ENCODE measurements at regions of chr3 and their contacts with region 1.

Region 1: DNA sequence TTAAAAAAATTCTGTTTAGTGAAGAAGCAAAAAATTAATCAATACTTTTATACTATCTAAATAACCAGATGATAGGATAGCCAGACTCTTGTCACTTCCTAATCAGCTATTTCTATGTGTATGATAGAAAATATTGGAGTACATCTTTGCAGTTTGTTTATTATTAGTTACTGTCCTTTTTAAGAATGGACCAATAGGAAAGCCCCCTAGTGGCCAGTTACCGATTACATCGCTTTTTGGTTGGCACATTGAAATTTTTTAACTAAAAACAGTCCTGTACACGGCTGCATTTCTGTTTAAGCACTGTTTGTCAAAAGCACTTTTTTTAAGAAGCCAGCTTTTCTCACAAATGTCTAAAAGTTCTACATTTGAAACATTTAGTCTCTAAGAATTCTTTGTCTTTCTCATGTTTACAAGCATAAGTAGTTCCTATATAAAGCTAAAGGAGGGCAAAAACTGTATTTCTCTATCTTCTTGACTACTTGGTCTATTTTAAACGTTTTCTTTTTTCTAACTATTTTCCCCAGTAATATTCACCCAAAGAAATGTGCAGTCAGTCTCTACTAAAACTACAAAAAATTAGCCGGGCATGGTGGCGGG is 253.2 kb upstream of the LRTM1 start:
- H3K4me3 Mint-ChIP-seq: no peak overlapping the region
- H3K27ac Mint-ChIP-seq: no peak overlapping the region
- H3K4me1 Mint-ChIP-seq: no peaks in the 10 kb centered on the region
- H3K27me3 Mint-ChIP-seq: peaks cover 13% of the 10 kb centered on the region

Region 2: DNA sequence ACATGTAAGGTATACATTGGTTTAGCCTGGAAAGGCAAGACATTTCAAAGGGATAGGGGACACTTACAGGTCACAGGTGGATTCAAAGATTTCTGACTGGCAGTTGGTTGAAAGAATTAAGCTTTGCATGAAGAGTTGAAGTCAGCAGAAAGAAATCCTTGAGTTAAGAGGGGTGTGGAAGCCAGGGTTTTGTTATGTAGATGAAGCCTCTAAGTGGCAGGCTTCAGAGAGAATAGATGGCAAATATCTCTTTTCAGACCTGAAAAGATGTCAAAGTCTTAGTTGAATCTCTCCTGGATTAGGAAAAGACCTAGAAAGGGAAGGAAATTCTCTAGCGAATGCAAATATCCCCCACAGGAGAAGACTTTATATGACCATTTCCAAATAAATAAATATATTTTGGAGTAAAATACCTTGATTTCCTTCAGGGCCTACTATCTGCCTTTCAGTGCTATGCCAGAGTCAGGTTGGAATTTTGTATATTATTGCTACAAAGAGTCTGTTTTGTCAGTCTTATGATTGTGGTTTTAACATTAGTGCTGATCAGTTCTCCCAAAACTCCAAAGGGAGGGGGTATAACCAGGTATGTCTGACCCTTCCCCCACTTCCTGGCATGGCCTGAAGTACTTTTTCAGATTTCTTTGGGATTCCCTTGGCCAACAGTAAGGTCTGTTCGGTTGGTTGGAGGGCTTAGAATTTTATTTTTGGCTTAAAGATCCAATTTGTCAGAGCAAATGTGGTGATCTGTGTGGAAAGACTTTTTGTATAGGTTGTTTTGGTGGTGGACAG is 539.6 kb before region 1 on chr3:
- intact Hi-C with region 1: no loop called
- H3K4me3 Mint-ChIP-seq: no peak overlapping the region
- H3K27ac Mint-ChIP-seq: no peak overlapping the region
- H3K4me1 Mint-ChIP-seq: no peaks in the 10 kb centered on the region
- H3K27me3 Mint-ChIP-seq: peaks cover 29% of the 10 kb centered on the region

Region 3: DNA sequence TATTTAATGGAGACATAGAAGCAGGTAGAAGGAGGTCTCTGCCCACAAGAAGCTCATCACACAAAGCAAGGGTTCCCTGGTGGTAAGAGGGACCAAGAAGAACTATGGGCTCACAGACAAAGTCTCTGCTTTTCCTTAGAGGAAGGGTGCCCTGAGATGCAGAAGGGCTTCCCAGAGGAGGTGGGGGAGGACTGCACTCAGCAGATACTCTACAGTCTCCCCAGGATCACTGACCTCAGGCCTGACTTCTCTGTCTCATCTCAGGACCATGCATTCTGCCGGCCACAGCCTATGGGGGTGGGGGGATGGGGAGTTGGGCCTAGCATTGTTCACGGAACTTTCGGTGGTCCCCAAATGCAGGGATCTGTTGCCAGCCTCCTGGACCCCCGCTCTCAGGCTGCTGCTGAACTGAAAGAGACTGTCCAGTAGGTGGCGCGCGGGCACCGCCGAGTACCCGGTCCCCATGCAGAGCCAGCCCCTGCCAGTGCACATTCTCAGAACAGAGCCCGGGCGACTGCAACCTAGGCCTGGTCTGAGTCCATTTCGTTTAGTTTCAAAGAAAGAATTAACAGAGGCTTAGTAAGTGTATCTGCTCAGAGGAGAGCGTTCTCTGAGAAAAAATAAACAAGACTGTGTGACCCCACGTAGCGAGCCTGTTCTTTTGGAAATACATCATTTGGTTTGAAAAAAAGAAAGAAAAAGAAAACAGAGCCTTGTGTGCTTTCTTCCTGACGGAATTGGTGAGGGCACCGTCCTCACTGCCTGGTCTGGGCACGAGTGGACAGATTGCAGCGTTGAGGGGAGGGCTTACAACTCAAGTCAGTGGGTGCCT is 327.2 kb before region 1 on chr3:
- intact Hi-C with region 1: loop called (anchors 2 kb)
- H3K4me3 Mint-ChIP-seq: no peak overlapping the region
- H3K27ac Mint-ChIP-seq: no peak overlapping the region
- H3K4me1 Mint-ChIP-seq: no peaks in the 10 kb centered on the region
- H3K27me3 Mint-ChIP-seq: peaks cover 7% of the 10 kb centered on the region

Region 4: GRCh38 chr3:54951405-54951804 is 229.6 kb before region 1 on chr3:
- intact Hi-C with region 1: loop called (anchors 1 kb)
- H3K4me3 Mint-ChIP-seq: no peak overlapping the region
- H3K27ac Mint-ChIP-seq: no peak overlapping the region
- H3K4me1 Mint-ChIP-seq: no peaks in the 10 kb centered on the region
- H3K27me3 Mint-ChIP-seq: peaks cover 6% of the 10 kb centered on the region

Region 5: DNA sequence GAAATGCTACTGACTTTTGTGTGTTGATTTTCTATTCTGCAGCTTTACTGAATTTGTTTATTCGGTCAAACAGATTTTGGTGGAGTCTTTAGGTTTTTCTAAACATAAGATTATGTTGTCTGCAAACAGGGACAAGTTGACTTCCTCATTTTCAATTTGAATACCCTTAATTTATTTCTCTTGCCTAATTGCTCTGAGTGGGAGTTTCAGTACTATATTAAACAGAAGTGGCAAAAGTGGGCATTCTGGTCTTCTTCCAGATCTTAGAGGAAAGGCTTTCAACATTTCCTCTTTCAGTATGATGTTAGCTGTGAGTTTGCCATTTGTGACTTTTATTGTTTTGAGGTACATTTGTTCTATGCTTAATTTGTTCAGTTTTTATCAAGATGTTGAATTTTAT is 37.5 kb after region 1 on chr3:
- intact Hi-C with region 1: no loop called
- H3K4me3 Mint-ChIP-seq: no peak overlapping the region
- H3K27ac Mint-ChIP-seq: no peak overlapping the region
- H3K4me1 Mint-ChIP-seq: peaks cover 8% of the 10 kb centered on the region
- H3K27me3 Mint-ChIP-seq: no peaks in the 10 kb centered on the region